Caco-2 (cell line): ENCODE measurements at regions of chr9 and their contacts with region 1.

Region 1: GRCh38 chr9:121156263-121156731 is 45.4 kb downstream of the RAB14 start:
- DNase-seq: no peak
- H3K4me3 ChIP-seq: no peak overlapping the region
- H3K4me3 Mint-ChIP-seq: no peak overlapping the region
- H3K27ac Mint-ChIP-seq: no peak overlapping the region
- H3K4me1 ChIP-seq: peaks cover 9% of the 10 kb centered on the region
- H3K4me1 Mint-ChIP-seq: peaks cover 13% of the 10 kb centered on the region
- H3K27me3 ChIP-seq: no peaks in the 10 kb centered on the region
- H3K27me3 Mint-ChIP-seq: no peaks in the 10 kb centered on the region
- CTCF ChIP-seq: no peak

Region 2: GRCh38 chr9:121121582-121122087 is 34.7 kb before region 1 on chr9:
- CTCF ChIA-PET with region 1: interaction called, 8 read pairs
- POLR2A ChIA-PET with region 1: no interaction called
- intact Hi-C with region 1: loop called (anchors 5 kb)
- DNase-seq: peak; percentile 97
- H3K4me3 ChIP-seq: peak overlapping the region; percentile 48
- H3K4me3 Mint-ChIP-seq: peak overlapping the region; percentile 92
- H3K27ac Mint-ChIP-seq: peak overlapping the region; percentile 84
- H3K4me1 ChIP-seq: peaks cover 3% of the 10 kb centered on the region; the same call in 1 of the 2 replicates
- H3K4me1 Mint-ChIP-seq: no peaks in the 10 kb centered on the region
- H3K27me3 ChIP-seq: no peaks in the 10 kb centered on the region
- H3K27me3 Mint-ChIP-seq: no peaks in the 10 kb centered on the region
- CTCF ChIP-seq: no peak

Region 3: DNA sequence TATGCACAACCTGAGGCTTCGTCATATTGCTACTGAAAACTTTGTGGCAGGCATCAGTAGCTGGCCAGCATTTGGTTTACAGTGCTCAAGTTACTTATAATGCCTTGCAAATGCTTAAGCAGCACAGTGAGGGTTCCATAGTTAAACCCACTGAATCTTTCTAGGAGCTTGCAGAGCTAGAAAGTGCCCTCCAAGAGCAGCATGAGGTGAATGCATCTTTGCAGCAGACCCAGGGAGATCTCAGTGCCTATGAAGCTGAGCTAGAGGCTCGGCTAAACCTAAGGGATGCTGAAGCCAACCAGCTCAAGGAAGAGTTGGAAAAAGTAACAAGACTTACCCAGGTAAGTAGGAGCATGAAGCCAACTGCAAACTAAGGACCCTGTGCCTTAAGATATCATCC is 20.7 kb before region 1 on chr9:
- CTCF ChIA-PET with region 1: no interaction called
- POLR2A ChIA-PET with region 1: no interaction called
- intact Hi-C with region 1: no loop called
- DNase-seq: no peak
- H3K4me3 ChIP-seq: no peak overlapping the region
- H3K4me3 Mint-ChIP-seq: no peak overlapping the region
- H3K27ac Mint-ChIP-seq: no peak overlapping the region
- H3K4me1 ChIP-seq: peaks cover 5% of the 10 kb centered on the region; the same call in 1 of the 2 replicates
- H3K4me1 Mint-ChIP-seq: no peaks in the 10 kb centered on the region
- H3K27me3 ChIP-seq: no peaks in the 10 kb centered on the region
- H3K27me3 Mint-ChIP-seq: no peaks in the 10 kb centered on the region
- CTCF ChIP-seq: no peak